CD8-positive, alpha-beta memory T cell (primary cell): ENCODE measurements at regions of chr20 and their contacts with region 1.

Region 1: DNA sequence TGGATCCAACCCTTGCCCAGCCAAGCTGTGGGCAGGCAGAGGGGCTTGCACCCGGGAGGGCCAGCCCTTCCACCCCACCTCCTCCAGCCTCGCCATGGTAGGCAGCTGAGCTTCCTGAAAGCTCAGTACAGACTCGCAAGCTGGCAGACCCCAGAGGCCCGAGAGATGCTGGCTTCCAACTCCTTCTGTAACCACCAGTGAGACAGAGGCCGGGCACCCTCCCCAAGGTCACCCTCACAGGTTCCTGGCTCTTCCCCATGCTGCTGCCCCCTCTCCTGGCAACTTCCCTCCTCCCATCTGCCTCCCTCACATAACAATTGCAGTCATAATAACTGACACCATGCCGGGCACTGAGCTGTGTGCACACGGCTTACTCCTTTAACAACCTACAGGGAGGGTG is 26.2 kb upstream of the NOL4L start:
- DNase-seq: no peak
- H3K4me3 ChIP-seq: no peak overlapping the region
- H3K4me3 Mint-ChIP-seq: no peak overlapping the region
- H3K27ac ChIP-seq: no peak overlapping the region
- H3K27ac Mint-ChIP-seq: peak overlapping the region in 2 of 8 donors; percentile 48 to 92
- H3K4me1 ChIP-seq: peaks cover 2% of the 10 kb centered on the region
- H3K4me1 Mint-ChIP-seq: peaks cover 0 to 6% (median 3%) of the 10 kb centered on the region in 3 donors
- H3K27me3 ChIP-seq: no peaks in the 10 kb centered on the region
- H3K27me3 Mint-ChIP-seq: peaks cover 7 to 12% of the 10 kb centered on the region in 2 donors

Region 2: GRCh38 chr20:32427996-32428395 is 183.3 kb before region 1 on chr20:
- CTCF ChIA-PET with region 1: no interaction called
- POLR2A ChIA-PET with region 1: interaction called, 13 read pairs
- DNase-seq: no peak
- H3K4me3 ChIP-seq: no peak overlapping the region
- H3K4me3 Mint-ChIP-seq: no peak overlapping the region
- H3K27ac ChIP-seq: no peak overlapping the region
- H3K27ac Mint-ChIP-seq: peak overlapping the region in 4 of 8 donors; percentile 48 to 85 (median 60)
- H3K4me1 ChIP-seq: no peaks in the 10 kb centered on the region
- H3K4me1 Mint-ChIP-seq: peaks cover 14 to 23% (median 21%) of the 10 kb centered on the region in 3 donors
- H3K27me3 ChIP-seq: no peaks in the 10 kb centered on the region
- H3K27me3 Mint-ChIP-seq: no peaks in the 10 kb centered on the region